WTC11 (cell line): ENCODE measurements at regions of chr12 and their contacts with region 1.

Region 1: GRCh38 chr12:7933255-7933729 is 2.7 kb downstream of the SLC2A3 start:
- DNase-seq: peak; percentile 66
- ATAC-seq: peak; percentile 92
- H3K4me3 Mint-ChIP-seq: no peak overlapping the region
- H3K27ac Mint-ChIP-seq: no peak overlapping the region
- H3K4me1 Mint-ChIP-seq: peaks cover 36% of the 10 kb centered on the region
- H3K27me3 Mint-ChIP-seq: no peaks in the 10 kb centered on the region
- CTCF ChIP-seq: peak; percentile 48; the same call in 1 of the 2 replicates

Region 2: DNA sequence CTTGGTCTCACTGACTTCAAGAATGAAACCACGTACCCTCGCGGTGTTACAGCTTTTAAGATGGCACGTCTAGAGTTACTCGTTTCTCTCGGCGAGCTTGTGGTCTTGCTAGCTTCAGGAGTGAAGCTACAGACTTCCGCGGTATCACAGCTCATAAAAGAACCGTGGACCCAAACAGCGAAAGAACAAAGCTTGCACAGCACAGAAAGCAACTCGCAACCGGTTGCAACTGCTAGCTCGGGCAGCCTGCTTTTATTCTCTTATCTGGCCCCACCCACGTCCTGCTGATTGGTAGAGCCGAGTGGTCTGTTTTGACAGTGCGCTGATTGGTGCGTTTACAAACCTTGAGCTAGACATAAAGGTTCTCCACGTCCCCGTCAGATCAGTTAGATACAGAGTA is 181.9 kb before region 1 on chr12:
- CTCF ChIA-PET with region 1: no interaction called
- POLR2A ChIA-PET with region 1: no interaction called
- DNase-seq: no peak
- ATAC-seq: peak; percentile 28
- H3K4me3 Mint-ChIP-seq: no peak overlapping the region
- H3K27ac Mint-ChIP-seq: no peak overlapping the region
- H3K4me1 Mint-ChIP-seq: peaks cover 14% of the 10 kb centered on the region
- H3K27me3 Mint-ChIP-seq: no peaks in the 10 kb centered on the region
- CTCF ChIP-seq: no peak

Region 3: DNA sequence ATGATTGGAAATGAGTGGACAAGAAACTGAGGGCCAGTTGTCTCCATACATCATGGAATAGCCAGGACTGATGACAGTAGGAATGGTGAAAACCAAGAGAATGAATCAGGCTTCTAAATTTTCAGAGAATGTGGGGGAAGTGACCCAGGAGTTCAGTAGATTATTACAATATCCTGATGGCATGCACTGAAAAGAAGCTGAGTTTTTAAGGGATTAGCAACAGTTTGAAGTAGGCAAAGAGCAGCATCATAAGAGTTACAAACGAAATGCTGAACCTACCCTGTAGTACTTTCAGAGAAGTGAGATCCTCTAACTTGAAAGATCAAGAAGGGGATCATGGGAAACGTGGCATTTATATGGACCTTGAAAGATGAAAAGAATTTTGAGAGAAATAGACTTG is 73.7 kb before region 1 on chr12:
- CTCF ChIA-PET with region 1: interaction called, 15 read pairs
- POLR2A ChIA-PET with region 1: interaction called, 7 read pairs
- DNase-seq: no peak
- ATAC-seq: no peak
- H3K4me3 Mint-ChIP-seq: no peak overlapping the region
- H3K27ac Mint-ChIP-seq: peak overlapping the region; percentile 99
- H3K4me1 Mint-ChIP-seq: peaks cover 51% of the 10 kb centered on the region
- H3K27me3 Mint-ChIP-seq: no peaks in the 10 kb centered on the region; the same call in 1 of the 2 replicates
- CTCF ChIP-seq: no peak

Region 4: GRCh38 chr12:7916936-7917335 is 16.4 kb before region 1 on chr12:
- CTCF ChIA-PET with region 1: interaction called, 17 read pairs
- POLR2A ChIA-PET with region 1: interaction called, 10 read pairs
- DNase-seq: no peak
- ATAC-seq: peak; percentile 54
- H3K4me3 Mint-ChIP-seq: no peak overlapping the region
- H3K27ac Mint-ChIP-seq: peak overlapping the region; percentile 97
- H3K4me1 Mint-ChIP-seq: peaks cover 53% of the 10 kb centered on the region
- H3K27me3 Mint-ChIP-seq: no peaks in the 10 kb centered on the region
- CTCF ChIP-seq: no peak

Region 5: GRCh38 chr12:7970475-7971252 is 37.4 kb after region 1 on chr12:
- CTCF ChIA-PET with region 1: interaction called, 9 read pairs
- POLR2A ChIA-PET with region 1: interaction called, 31 read pairs
- DNase-seq: peak; percentile 96
- ATAC-seq: peak; percentile 96
- H3K4me3 Mint-ChIP-seq: peak overlapping the region; percentile 71
- H3K27ac Mint-ChIP-seq: peak overlapping the region; percentile 100
- H3K4me1 Mint-ChIP-seq: peaks cover 65% of the 10 kb centered on the region
- H3K27me3 Mint-ChIP-seq: no peaks in the 10 kb centered on the region
- CTCF ChIP-seq: no peak

Region 6: DNA sequence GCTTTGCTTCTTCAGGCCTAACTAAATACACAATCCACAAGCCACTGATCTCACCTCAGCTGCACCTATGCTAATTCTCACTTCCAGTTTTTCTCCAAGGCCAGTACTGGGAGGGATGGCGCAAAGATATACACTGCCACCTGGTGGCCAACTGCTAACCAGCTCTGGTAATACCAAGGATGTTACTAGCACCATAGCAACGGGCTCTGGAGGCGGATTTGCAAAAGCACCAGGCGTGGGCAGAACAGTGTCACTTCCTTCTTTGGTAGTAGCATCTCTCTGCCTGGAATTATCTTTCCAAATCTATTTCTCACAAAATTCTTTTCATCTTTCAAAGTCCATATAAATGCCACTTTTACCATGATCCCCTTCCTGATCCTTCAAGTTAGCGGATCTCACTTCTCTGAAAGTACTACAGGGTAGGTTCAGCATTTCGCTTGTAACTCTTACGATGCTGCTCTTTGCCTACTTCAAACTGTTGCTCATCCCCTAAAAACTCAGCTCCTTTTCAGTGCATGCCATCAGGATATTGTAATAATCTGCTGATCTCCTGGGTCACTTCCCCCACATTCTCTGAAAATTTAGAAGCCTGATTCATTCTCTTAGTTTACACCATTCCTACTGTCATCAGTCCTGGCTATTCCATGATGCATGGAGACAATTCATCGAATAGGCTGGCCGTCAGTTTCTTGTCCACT is 62.1 kb after region 1 on chr12:
- CTCF ChIA-PET with region 1: interaction called, 54 read pairs
- POLR2A ChIA-PET with region 1: interaction called, 4 read pairs
- DNase-seq: peak; percentile 76
- ATAC-seq: peak; percentile 95
- H3K4me3 Mint-ChIP-seq: no peak overlapping the region
- H3K27ac Mint-ChIP-seq: no peak overlapping the region
- H3K4me1 Mint-ChIP-seq: peaks cover 12% of the 10 kb centered on the region
- H3K27me3 Mint-ChIP-seq: no peaks in the 10 kb centered on the region
- CTCF ChIP-seq: peak; percentile 87